CD8-positive, alpha-beta memory T cell (primary cell): ENCODE measurements at regions of chr1 and their contacts with region 1.

Region 1: DNA sequence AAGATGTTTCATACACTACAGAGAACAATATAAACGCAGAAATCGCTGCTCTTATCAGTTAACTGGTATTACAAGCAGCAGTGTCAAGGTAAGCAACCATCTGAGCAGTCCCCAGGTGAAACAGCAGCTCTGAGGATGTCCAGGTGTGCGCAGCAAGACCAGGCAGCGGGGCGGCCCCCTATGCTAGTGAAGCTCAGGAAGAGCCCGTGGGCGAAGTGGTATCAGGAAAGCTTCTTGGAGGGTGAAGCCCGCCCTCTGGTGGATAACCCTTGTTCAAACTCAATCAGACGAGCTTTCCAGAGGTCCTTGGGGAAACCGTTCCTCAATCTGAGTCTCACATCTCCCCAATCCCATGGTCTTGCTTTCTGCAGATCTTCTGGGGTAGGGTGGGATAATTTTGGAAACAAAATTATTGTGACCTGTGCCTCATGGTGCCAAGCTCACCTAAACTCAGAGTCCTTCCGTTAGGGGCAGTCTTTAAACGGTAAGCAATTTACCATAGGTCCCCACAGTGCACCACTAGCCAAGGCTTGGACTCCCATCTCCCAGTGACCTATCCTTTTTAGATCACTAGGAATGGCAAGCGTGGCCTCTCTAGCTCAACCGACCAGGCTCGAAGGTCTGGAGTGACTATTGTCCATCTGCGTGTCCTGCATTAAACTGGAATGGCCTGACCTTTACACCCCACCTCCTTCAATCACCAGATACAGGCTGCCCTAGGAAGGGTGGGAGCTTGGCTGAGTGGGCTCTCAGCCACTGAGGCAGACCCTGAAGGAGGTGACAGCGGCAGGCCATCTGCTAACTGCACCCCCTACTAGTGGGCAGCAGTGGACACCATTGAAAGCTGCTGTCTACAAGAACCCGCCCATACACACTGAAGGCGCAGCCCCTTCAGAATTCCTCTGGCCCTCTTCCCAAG is 13.6 kb upstream of the FAM110D start:
- DNase-seq: peak; percentile 56 to 84 (median 66)
- H3K4me3 ChIP-seq: no peak overlapping the region
- H3K4me3 Mint-ChIP-seq: peak overlapping the region in 2 of 7 donors; percentile 29 to 51
- H3K27ac ChIP-seq: no peak overlapping the region
- H3K27ac Mint-ChIP-seq: peak overlapping the region in 1 of 8 donors; percentile 62
- H3K4me1 ChIP-seq: peaks cover 3% of the 10 kb centered on the region
- H3K4me1 Mint-ChIP-seq: peaks cover 2 to 8% (median 6%) of the 10 kb centered on the region in 3 donors
- H3K27me3 ChIP-seq: no peaks in the 10 kb centered on the region
- H3K27me3 Mint-ChIP-seq: peaks cover 5 to 25% of the 10 kb centered on the region in 2 donors

Region 2: GRCh38 chr1:25819576-25820246 is 325.6 kb before region 1 on chr1 and contains the start of gene MTFR1L:
- CTCF ChIA-PET with region 1: no interaction called
- POLR2A ChIA-PET with region 1: no interaction called
- DNase-seq: peak; percentile 90 to 95 (median 92)
- H3K4me3 ChIP-seq: peak within 1 kb of the TSS; percentile 71
- H3K4me3 Mint-ChIP-seq: peak within 1 kb of the TSS; percentile 92 to 98 (median 94)
- H3K27ac ChIP-seq: peak within 1 kb of the TSS; percentile 90
- H3K27ac Mint-ChIP-seq: peak within 1 kb of the TSS; percentile 83 to 99 (median 96)
- H3K4me1 ChIP-seq: peaks cover 37% of the 10 kb centered on the region
- H3K4me1 Mint-ChIP-seq: peaks cover 30 to 40% (median 35%) of the 10 kb centered on the region in 3 donors
- H3K27me3 ChIP-seq: no peaks in the 10 kb centered on the region
- H3K27me3 Mint-ChIP-seq: peaks cover 0 to 4% of the 10 kb centered on the region in 2 donors
- total RNA-seq, gene MTFR1L: 30.2 to 33.5 TPM

Region 3: GRCh38 chr1:26102526-26102925 is 42.8 kb before region 1 on chr1:
- CTCF ChIA-PET with region 1: interaction called, 122 read pairs
- POLR2A ChIA-PET with region 1: interaction called, 5 read pairs
- DNase-seq: no peak
- H3K4me3 ChIP-seq: no peak overlapping the region
- H3K4me3 Mint-ChIP-seq: no peak overlapping the region
- H3K27ac ChIP-seq: no peak overlapping the region
- H3K27ac Mint-ChIP-seq: no peak overlapping the region
- H3K4me1 ChIP-seq: no peaks in the 10 kb centered on the region
- H3K4me1 Mint-ChIP-seq: peaks cover 4 to 5% (median 5%) of the 10 kb centered on the region in 3 donors
- H3K27me3 ChIP-seq: no peaks in the 10 kb centered on the region
- H3K27me3 Mint-ChIP-seq: peaks cover 8 to 12% of the 10 kb centered on the region in 2 donors

Region 4: GRCh38 chr1:26111530-26112406 is 33.5 kb before region 1 on chr1 and contains the start of gene PDIK1L:
- CTCF ChIA-PET with region 1: interaction called, 122 read pairs
- POLR2A ChIA-PET with region 1: interaction called, 8 read pairs
- DNase-seq: peak; percentile 91 to 95 (median 92)
- H3K4me3 ChIP-seq: peak within 1 kb of the TSS; percentile 89
- H3K4me3 Mint-ChIP-seq: peak within 1 kb of the TSS; percentile 91 to 97 (median 93)
- H3K27ac ChIP-seq: peak within 1 kb of the TSS; percentile 85
- H3K27ac Mint-ChIP-seq: peak within 1 kb of the TSS; percentile 74 to 94 (median 92)
- H3K4me1 ChIP-seq: peaks cover 26% of the 10 kb centered on the region
- H3K4me1 Mint-ChIP-seq: peaks cover 22 to 38% (median 36%) of the 10 kb centered on the region in 3 donors
- H3K27me3 ChIP-seq: no peaks in the 10 kb centered on the region
- H3K27me3 Mint-ChIP-seq: no peaks in the 10 kb centered on the region
- total RNA-seq, gene PDIK1L: 14.5 to 14.6 TPM

Region 5: DNA sequence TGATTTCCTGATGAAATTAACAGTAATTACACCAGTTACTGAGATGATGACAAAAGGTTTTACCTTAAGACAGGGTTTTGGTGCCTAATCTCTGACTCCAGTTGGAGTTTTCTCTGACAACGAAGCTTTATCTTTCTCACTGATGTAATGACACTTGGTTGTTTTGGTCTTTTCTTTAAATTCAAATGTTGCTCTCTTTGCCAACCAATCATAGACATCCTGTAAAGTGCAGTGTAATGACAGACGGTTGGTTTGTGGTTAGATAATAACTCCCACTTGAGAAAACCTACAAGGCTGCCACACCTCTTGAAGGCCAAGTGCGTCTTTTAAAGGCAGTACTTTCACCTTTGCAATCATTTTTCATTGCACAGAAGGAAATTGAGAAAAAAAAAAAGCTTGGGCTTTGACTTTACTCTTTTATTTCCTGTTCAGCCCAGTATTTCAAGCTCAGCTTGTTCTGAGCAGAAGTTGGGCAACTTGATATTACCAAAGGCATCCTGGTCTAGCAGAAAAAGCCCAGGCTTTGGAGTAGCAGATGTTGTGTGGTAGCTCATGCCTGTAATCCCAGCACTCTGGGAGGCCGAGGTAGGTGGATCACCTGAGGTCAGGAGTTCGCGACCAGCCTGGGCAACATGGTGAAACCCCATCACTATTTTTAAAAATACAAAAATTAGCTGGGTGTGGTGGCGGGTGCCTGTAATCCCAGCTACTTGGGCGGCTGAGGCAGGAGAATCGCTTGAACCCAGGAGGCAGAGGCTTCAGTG is 18.8 kb before region 1 on chr1:
- CTCF ChIA-PET with region 1: interaction called, 39 read pairs
- POLR2A ChIA-PET with region 1: interaction called, 14 read pairs
- DNase-seq: peak in 4 of 5 donors; percentile 46 to 90 (median 84)
- H3K4me3 ChIP-seq: peak overlapping the region; percentile 38
- H3K4me3 Mint-ChIP-seq: peak overlapping the region; percentile 22 to 82 (median 71)
- H3K27ac ChIP-seq: peak overlapping the region; percentile 79
- H3K27ac Mint-ChIP-seq: peak overlapping the region; percentile 58 to 93 (median 89)
- H3K4me1 ChIP-seq: peaks cover 29% of the 10 kb centered on the region
- H3K4me1 Mint-ChIP-seq: peaks cover 32 to 53% (median 48%) of the 10 kb centered on the region in 3 donors
- H3K27me3 ChIP-seq: no peaks in the 10 kb centered on the region
- H3K27me3 Mint-ChIP-seq: peaks cover 0 to 16% of the 10 kb centered on the region in 2 donors

Region 6: DNA sequence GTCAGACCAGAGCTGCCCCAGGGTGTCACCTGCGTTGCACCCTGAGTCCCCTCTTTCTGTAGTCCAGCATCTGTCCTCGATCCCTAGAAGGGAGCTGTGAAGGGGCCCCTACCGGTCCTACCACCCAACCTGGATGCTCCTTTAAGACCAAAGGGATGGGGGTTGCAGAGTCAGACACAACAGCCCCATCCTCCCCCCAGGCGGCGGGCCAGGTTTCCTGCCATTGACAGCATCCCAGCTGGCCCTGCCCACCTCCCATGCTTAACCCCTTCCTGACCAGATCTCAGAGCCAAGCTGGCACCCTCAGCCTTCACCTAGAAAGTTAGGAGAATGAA is 11.4 kb after region 1 on chr1:
- CTCF ChIA-PET with region 1: interaction called, 18 read pairs
- POLR2A ChIA-PET with region 1: no interaction called
- DNase-seq: no peak
- H3K4me3 ChIP-seq: no peak overlapping the region
- H3K4me3 Mint-ChIP-seq: no peak overlapping the region
- H3K27ac ChIP-seq: no peak overlapping the region
- H3K27ac Mint-ChIP-seq: no peak overlapping the region
- H3K4me1 ChIP-seq: no peaks in the 10 kb centered on the region
- H3K4me1 Mint-ChIP-seq: peaks cover 0 to 6% (median 1%) of the 10 kb centered on the region in 3 donors
- H3K27me3 ChIP-seq: peaks cover 10% of the 10 kb centered on the region
- H3K27me3 Mint-ChIP-seq: peaks cover 37 to 57% of the 10 kb centered on the region in 2 donors

Region 7: GRCh38 chr1:26169669-26170471 is 24.6 kb after region 1 on chr1 and contains the start of gene ZNF593:
- CTCF ChIA-PET with region 1: interaction called, 13 read pairs
- POLR2A ChIA-PET with region 1: no interaction called
- DNase-seq: peak; percentile 71 to 88 (median 81)
- H3K4me3 ChIP-seq: peak within 1 kb of the TSS; percentile 68
- H3K4me3 Mint-ChIP-seq: peak within 1 kb of the TSS; percentile 86 to 95 (median 88)
- H3K27ac ChIP-seq: peak within 1 kb of the TSS; percentile 86
- H3K27ac Mint-ChIP-seq: peak within 1 kb of the TSS; percentile 39 to 97 (median 85)
- H3K4me1 ChIP-seq: peaks cover 17% of the 10 kb centered on the region
- H3K4me1 Mint-ChIP-seq: peaks cover 12 to 25% (median 22%) of the 10 kb centered on the region in 3 donors
- H3K27me3 ChIP-seq: no peaks in the 10 kb centered on the region
- H3K27me3 Mint-ChIP-seq: peaks cover 0 to 2% of the 10 kb centered on the region in 2 donors
- total RNA-seq, gene ZNF593: 86.4 to 87.9 TPM

Region 8: DNA sequence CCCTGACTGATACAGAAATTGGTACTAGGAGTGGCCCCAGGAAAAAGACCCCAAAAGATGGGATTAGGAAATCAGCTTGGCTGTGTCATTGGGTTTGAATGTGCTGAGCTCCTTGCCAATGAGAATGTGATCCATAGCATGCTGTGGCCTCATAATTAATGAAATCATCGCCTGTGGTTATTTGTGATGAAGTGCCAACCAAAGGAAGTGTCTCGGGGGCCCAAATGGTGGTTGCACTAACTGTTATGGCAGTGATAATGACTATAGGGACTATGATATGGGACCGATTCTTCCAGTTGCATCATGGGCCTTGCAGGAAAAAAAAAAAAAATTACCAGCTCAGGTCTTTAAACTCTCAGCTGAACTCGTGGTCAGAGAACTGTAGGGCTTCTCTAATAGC is 665.8 kb after region 1 on chr1:
- CTCF ChIA-PET with region 1: no interaction called
- POLR2A ChIA-PET with region 1: no interaction called
- DNase-seq: peak in 1 of 5 donors; percentile 60
- H3K4me3 ChIP-seq: no peak overlapping the region
- H3K4me3 Mint-ChIP-seq: peak overlapping the region; percentile 11 to 76 (median 55)
- H3K27ac ChIP-seq: no peak overlapping the region
- H3K27ac Mint-ChIP-seq: peak overlapping the region; percentile 59 to 96 (median 92)
- H3K4me1 ChIP-seq: peaks cover 11% of the 10 kb centered on the region
- H3K4me1 Mint-ChIP-seq: peaks cover 21% of the 10 kb centered on the region in 3 donors
- H3K27me3 ChIP-seq: no peaks in the 10 kb centered on the region
- H3K27me3 Mint-ChIP-seq: no peaks in the 10 kb centered on the region